ENCODE measurements at regions of chr15 and their contacts with region 1.

Region 1: DNA sequence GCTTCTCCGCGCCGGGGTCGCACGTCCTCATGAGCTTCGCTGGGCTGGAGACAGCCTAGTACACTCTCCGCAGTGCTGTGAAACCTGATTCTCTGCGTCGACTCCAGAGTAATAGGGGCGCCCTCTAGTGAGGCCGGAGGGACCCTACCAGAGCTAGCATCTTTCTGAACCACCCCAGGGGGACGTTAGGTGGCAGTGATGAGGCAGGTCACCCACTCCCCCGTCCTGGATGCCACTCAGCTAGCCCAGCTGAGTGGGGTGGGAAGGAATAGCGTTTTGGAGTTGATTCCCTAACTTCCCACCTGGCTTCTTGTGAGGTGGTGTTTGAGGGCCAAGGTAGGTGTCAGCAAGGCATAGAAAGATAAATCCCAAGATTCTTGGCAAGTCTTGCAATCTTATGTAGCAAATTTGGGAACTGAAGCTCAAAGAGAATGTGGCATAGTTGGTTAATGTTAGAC is 4.0 kb downstream of the DUOXA2 start:
- DNase-seq: peak; percentile 89
- ATAC-seq: peak; percentile 98
- H3K4me3 Mint-ChIP-seq: peak overlapping the region; percentile 60
- H3K27ac Mint-ChIP-seq: no peak overlapping the region
- H3K4me1 Mint-ChIP-seq: peaks cover 22% of the 10 kb centered on the region
- H3K27me3 Mint-ChIP-seq: peaks cover 65% of the 10 kb centered on the region

Region 2: DNA sequence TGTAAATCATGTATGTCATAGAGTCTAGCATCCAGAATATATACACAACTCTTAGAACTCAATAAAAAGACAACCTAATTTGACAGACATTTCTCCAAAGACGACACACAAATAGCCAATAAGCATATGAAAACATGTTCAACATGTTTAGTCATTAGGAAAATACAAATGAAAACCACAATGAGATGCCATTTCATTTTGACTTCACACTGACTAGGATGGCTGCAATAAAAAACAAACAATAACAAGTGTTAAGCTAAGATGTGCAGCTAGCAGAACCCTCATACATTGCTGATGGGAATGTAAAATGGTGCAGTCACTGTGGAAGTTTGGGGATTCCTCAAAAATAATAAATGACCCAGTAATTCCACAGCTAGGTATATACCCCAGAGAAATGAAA is 471.1 kb before region 1 on chr15:
- CTCF ChIA-PET with region 1: no interaction called
- POLR2A ChIA-PET with region 1: no interaction called
- DNase-seq: no peak
- ATAC-seq: no peak
- H3K4me3 Mint-ChIP-seq: no peak overlapping the region
- H3K27ac Mint-ChIP-seq: peak overlapping the region; percentile 43
- H3K4me1 Mint-ChIP-seq: peaks cover 15% of the 10 kb centered on the region
- H3K27me3 Mint-ChIP-seq: no peaks in the 10 kb centered on the region

Region 3: GRCh38 chr15:44775953-44776352 is 342.2 kb before region 1 on chr15:
- CTCF ChIA-PET with region 1: no interaction called
- POLR2A ChIA-PET with region 1: no interaction called
- DNase-seq: no peak
- ATAC-seq: no peak
- H3K4me3 Mint-ChIP-seq: no peak overlapping the region
- H3K27ac Mint-ChIP-seq: no peak overlapping the region
- H3K4me1 Mint-ChIP-seq: peaks cover 5% of the 10 kb centered on the region
- H3K27me3 Mint-ChIP-seq: peaks cover 3% of the 10 kb centered on the region

Region 4: DNA sequence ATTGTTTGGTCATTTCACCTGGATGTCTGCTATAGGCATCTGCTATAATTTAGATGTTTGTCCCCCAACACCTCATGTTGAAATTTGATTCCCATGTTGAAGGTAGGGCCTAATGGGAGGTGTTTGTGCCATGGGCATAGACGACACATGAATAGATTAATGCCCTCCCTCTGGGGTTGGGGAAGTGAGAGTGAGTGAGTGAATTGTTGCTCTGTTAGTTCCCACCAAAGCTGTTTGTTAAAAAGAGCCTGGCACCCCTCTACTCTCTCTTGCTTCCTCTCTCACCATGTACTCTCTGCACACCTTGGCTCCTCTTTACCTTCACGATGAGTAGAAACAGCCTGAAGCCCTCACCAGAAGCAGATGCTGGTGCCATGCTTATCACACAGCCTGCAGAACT is 119.1 kb before region 1 on chr15:
- CTCF ChIA-PET with region 1: no interaction called
- POLR2A ChIA-PET with region 1: no interaction called
- DNase-seq: no peak
- ATAC-seq: no peak
- H3K4me3 Mint-ChIP-seq: no peak overlapping the region
- H3K27ac Mint-ChIP-seq: no peak overlapping the region
- H3K4me1 Mint-ChIP-seq: no peaks in the 10 kb centered on the region
- H3K27me3 Mint-ChIP-seq: peaks cover 21% of the 10 kb centered on the region

Region 5: GRCh38 chr15:45094358-45094730 is 23.8 kb before region 1 on chr15:
- CTCF ChIA-PET with region 1: interaction called, 12 read pairs
- POLR2A ChIA-PET with region 1: no interaction called
- DNase-seq: no peak
- ATAC-seq: no peak
- H3K4me3 Mint-ChIP-seq: no peak overlapping the region
- H3K27ac Mint-ChIP-seq: no peak overlapping the region
- H3K4me1 Mint-ChIP-seq: no peaks in the 10 kb centered on the region
- H3K27me3 Mint-ChIP-seq: peaks cover 18% of the 10 kb centered on the region

Region 6: GRCh38 chr15:45106002-45106790 is 12.0 kb before region 1 on chr15:
- CTCF ChIA-PET with region 1: interaction called, 19 read pairs
- POLR2A ChIA-PET with region 1: no interaction called
- DNase-seq: no peak
- ATAC-seq: no peak
- H3K4me3 Mint-ChIP-seq: no peak overlapping the region
- H3K27ac Mint-ChIP-seq: no peak overlapping the region
- H3K4me1 Mint-ChIP-seq: no peaks in the 10 kb centered on the region
- H3K27me3 Mint-ChIP-seq: peaks cover 24% of the 10 kb centered on the region

Region 7: DNA sequence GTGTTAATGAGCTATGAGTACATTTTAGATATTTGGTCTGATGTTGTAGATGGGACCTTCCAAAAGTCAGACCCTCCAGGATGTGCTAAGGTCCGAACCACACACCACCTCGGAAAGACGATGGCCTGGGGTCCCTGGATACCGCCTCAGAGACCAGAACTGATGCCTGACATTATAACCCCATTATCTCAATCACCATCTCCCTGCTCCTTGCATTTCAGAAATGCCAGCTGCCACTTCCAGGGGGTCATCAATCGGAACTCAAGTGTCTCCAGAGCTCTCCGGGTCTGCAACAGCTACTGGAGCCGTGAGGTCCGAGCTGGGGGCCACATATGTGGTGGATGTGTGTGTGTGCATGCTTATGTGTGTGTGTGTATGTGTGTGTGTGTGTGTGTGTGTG is 19.5 kb after region 1 on chr15:
- CTCF ChIA-PET with region 1: interaction called, 28 read pairs
- POLR2A ChIA-PET with region 1: no interaction called
- DNase-seq: no peak
- ATAC-seq: no peak
- H3K4me3 Mint-ChIP-seq: no peak overlapping the region
- H3K27ac Mint-ChIP-seq: no peak overlapping the region
- H3K4me1 Mint-ChIP-seq: peaks cover 7% of the 10 kb centered on the region
- H3K27me3 Mint-ChIP-seq: peaks cover 31% of the 10 kb centered on the region

Region 8: GRCh38 chr15:45274636-45275380 is 156.6 kb after region 1 on chr15:
- CTCF ChIA-PET with region 1: interaction called, 11 read pairs
- POLR2A ChIA-PET with region 1: no interaction called
- DNase-seq: no peak
- ATAC-seq: no peak
- H3K4me3 Mint-ChIP-seq: no peak overlapping the region
- H3K27ac Mint-ChIP-seq: no peak overlapping the region
- H3K4me1 Mint-ChIP-seq: peaks cover 20% of the 10 kb centered on the region
- H3K27me3 Mint-ChIP-seq: no peaks in the 10 kb centered on the region

Region 9: GRCh38 chr15:45604326-45604725 is 486.2 kb after region 1 on chr15:
- CTCF ChIA-PET with region 1: no interaction called
- POLR2A ChIA-PET with region 1: no interaction called
- DNase-seq: no peak
- ATAC-seq: no peak
- H3K4me3 Mint-ChIP-seq: no peak overlapping the region
- H3K27ac Mint-ChIP-seq: no peak overlapping the region
- H3K4me1 Mint-ChIP-seq: no peaks in the 10 kb centered on the region
- H3K27me3 Mint-ChIP-seq: no peaks in the 10 kb centered on the region

Measured in activated CD8-positive, alpha-beta T cell treated with anti-CD3 and anti-CD28 coated beads, Interleukin-2, amount 10 ng/mL, durations not matched to agents 7 days and 5 days (primary cell).